Right ventricle myocardium inferior (tissue), 1 donor: ENCODE measurements at regions of chr11 and their contacts with region 1.

Region 1: GRCh38 chr11:130449996-130450769 is 1.7 kb downstream of the ADAMTS15 start:
- DNase-seq: peak; percentile 94
- ATAC-seq: peak; percentile 78

Region 2: GRCh38 chr11:130522284-130522961 is 72.2 kb after region 1 on chr11:
- intact Hi-C with region 1: loop called (anchors 2 kb)
- DNase-seq: peak; percentile 94
- ATAC-seq: peak; percentile 91

Region 3: DNA sequence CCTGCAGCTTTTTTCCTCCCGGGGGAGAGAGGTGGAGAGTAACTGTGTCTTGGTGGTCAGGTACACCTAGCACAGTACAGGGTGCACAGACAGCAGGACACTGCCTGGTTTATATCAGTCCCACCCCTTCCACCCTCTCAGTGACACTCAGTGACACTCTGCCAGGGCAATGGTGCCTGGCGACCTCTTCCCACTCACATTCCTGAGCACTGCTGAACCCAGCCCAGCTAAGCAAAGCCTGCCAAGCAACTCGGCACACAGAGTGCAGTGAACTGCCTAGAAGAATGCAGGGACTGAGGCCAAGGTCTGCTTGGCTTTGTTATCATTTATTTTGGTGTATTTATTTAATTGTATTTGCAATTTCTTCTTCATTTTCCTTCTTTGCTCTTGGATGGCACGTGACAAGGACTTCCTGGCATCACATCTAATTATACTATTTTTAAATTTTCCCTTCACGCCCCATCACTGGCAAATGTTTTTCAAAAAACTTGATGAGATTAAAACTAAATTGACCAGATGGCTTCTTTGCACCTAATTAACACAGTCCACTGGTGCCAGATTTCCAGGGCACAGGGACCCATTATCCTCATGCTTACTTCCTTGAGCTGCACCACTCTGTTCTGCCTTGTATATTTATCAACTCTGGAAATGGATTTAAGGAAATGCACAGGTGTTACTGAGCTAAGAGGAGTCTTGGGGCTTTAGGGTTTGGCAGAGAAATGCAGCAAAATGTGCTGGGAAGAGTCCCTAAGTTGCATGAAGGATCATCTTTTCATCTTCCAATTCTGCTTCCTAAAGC is 203.9 kb after region 1 on chr11:
- intact Hi-C with region 1: loop called (anchors 2 kb)
- DNase-seq: peak; percentile 90
- ATAC-seq: peak; percentile 95

Region 4: GRCh38 chr11:130677486-130678153 is 227.4 kb after region 1 on chr11:
- intact Hi-C with region 1: loop called (anchors 1 kb)
- DNase-seq: no peak
- ATAC-seq: peak; percentile 69

Region 5: DNA sequence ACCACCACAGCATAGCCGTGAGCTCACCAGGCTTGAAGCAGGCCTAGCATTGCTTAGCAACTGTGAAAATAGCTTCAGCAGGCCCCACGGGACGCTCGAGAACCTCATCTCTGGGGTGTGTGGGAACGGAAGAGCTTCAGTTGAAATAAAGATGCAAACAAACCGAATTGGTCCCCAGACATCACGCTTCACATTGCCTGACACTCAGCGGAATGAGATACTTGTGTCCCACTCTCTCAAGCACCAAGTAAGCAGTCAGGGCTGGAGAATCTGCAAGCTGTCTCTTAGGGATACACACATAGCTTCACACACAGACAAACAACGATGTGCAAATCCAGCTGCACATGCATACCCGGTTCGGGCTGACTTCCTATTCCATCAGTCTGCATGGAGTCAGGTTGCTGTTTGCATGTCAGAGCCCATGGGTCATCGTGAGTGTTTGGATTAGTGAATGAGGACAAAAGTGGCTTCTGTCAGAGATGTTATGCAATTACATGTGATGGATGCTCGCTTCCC is 260.4 kb after region 1 on chr11:
- intact Hi-C with region 1: no loop called
- DNase-seq: no peak
- ATAC-seq: peak; percentile 25

Region 6: GRCh38 chr11:130827451-130828377 is 377.5 kb after region 1 on chr11:
- intact Hi-C with region 1: loop called (anchors 2 kb)
- DNase-seq: no peak
- ATAC-seq: peak; percentile 78

Region 7: DNA sequence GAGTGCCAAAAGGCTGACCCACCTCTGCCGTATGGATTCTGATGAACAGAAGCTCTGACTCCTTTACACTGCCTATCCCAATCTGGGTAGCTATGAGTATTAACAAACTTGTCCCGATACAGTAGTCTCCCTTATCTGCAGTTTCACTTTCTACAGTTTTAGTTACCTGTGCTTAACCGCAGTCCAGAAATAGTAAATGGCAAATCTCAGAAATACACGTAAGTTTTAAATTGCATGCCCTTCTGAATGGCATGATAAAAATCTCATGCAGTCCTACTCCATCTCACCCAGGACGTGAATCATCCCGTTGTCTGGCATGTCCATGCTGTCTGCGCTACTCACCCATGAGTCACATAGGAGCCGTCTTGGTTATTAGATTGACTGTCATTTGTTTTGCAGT is 397.3 kb after region 1 on chr11:
- intact Hi-C with region 1: no loop called
- DNase-seq: no peak
- ATAC-seq: no peak